MCF 10A (cell line): ENCODE measurements at regions of chr4 and their contacts with region 1.

Region 1: DNA sequence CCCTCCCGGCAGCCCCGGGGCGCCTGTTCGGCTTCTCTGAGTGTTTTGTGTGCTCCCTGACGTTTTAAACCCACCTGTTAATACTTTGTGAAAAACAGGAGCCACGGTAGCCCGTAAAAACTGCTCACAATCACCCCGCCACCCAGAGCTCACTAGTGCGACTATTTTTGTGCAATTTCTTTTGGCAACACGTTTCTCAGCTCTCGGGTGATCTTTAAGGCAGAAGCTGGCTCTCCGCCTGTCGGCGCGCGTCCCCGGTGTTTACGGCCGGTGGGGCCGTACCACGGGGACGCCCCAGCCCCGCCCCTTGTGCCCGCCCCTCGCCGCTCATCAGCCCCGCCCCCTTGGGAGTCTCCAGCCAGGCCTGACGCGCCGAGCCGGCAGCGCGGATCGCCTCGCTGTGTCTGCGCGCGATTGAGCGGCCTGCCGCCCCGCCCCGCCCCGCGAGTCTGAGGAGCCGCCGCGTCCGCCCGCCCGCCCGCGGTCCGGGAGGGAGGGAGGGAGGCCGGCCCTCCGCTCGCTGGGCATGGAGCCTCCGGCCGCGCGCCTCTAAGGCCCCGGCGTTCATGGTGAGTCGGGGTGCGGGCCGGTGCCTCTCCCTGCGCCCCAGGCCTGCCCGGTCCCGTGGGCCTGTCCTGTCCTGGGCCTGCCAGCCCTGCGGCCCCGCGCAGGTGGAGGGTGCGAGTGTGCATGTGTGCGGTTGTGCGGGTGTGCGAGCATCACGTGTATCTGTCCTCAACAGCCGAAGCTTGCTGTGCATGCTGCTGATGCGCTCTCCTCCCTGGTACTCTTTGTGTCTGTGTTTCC is 56.2 kb upstream of the TADA2B start:
- DNase-seq: peak; percentile 95
- H3K4me3 Mint-ChIP-seq: peak overlapping the region; percentile 97
- H3K27ac Mint-ChIP-seq: peak overlapping the region; percentile 95
- H3K4me1 Mint-ChIP-seq: peaks cover 45% of the 10 kb centered on the region
- H3K27me3 Mint-ChIP-seq: no peaks in the 10 kb centered on the region
- CTCF ChIP-seq: no peak

Region 2: GRCh38 chr4:6909073-6909965 is 77.7 kb before region 1 on chr4 and contains the start of gene TBC1D14:
- CTCF ChIA-PET with region 1: interaction called, 4 read pairs
- POLR2A ChIA-PET with region 1: interaction called, 46 read pairs
- intact Hi-C with region 1: loop called (anchors 5 kb)
- DNase-seq: peak; percentile 87
- H3K4me3 Mint-ChIP-seq: peak within 1 kb of the TSS; percentile 91
- H3K27ac Mint-ChIP-seq: peak within 1 kb of the TSS; percentile 77
- H3K4me1 Mint-ChIP-seq: peaks cover 29% of the 10 kb centered on the region
- H3K27me3 Mint-ChIP-seq: no peaks in the 10 kb centered on the region
- CTCF ChIP-seq: no peak
- total RNA-seq, gene TBC1D14: 52.6 and 55.1 TPM in 2 replicates

Region 3: GRCh38 chr4:6942238-6942800 is 44.7 kb before region 1 on chr4:
- CTCF ChIA-PET with region 1: interaction called, 3 read pairs
- POLR2A ChIA-PET with region 1: interaction called, 12 read pairs
- intact Hi-C with region 1: no loop called
- DNase-seq: peak; percentile 86
- H3K4me3 Mint-ChIP-seq: peak overlapping the region; percentile 49
- H3K27ac Mint-ChIP-seq: peak overlapping the region; percentile 95
- H3K4me1 Mint-ChIP-seq: peaks cover 32% of the 10 kb centered on the region
- H3K27me3 Mint-ChIP-seq: no peaks in the 10 kb centered on the region
- CTCF ChIP-seq: no peak

Region 4: DNA sequence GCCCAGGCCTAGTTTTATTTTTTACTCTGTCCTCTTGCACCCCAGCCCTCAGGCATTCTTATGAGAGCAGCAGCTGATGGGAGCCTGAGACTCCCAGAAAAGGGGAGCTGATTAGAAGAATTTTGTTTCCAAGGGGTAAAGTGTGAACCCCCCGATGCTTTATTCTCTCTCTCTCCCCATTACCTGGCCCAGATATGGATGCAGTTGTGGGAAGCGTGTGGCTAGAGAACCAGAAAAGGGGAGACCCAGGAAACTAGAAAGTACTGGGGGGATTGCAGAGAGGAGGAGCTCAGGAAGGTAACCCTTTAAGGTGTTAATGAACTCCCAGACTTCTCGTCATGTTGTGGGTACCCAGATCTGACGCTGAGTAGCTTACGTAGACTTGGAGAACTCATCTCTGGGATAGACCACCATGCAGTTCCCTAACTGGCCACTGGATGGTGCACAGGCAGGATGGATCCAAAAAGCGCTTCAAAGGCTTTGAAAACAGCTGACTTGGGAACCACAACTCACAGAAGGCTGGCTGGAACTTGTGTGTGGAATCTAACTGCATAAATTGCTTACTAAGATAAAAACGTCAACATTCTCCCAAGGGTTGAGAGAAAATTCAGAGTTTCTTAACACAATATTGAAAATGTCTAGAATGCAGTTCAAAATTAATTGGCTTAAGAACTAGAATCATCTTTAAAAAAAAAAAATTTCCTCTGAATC is 12.7 kb before region 1 on chr4:
- CTCF ChIA-PET with region 1: interaction called, 10 read pairs
- POLR2A ChIA-PET with region 1: interaction called, 19 read pairs
- intact Hi-C with region 1: no loop called
- DNase-seq: peak; percentile 87
- H3K4me3 Mint-ChIP-seq: no peak overlapping the region
- H3K27ac Mint-ChIP-seq: no peak overlapping the region
- H3K4me1 Mint-ChIP-seq: no peaks in the 10 kb centered on the region
- H3K27me3 Mint-ChIP-seq: no peaks in the 10 kb centered on the region
- CTCF ChIP-seq: peak; percentile 95

Region 5: DNA sequence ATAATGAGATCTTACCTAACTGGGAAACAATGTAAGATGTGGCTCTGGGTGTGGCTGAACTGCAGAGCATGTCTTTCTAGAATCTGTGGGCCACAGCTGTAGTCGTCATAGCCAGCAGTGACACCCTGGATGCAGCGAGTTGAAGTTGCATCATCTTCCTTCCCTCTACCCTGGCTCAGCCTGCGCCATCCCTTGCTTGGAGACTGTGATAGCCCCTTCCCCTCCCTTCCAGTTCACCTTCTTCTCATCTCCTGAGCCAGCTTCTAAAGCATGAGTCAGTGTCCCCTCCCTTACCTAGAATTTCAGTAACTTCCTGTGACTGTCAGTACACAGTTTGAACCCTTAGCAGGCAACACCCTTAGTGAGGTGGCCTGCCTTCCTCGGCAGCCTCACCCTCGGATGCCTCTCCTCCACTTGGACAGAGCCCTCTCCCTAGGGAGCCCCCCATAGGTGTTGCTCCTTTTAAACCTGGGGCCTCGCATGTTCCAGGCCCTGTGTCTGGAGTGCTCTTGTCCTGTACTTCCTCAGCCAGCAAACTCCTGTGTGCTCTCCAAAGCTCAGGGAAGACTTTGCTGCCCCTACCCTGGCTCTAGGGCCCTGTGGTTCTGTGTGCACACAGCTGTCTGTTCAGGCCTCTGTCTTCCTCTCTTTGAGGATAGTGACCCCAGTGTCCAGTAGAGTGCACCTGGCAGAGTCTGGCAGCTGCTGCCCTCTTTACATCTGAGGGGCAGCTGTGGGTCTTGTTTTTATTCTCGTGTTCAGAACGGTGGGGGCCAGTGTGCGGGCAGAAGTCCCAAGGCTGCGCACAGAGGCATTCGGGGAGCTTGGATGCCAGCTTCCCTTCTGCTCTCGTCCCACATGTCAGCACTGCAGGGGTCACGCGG is 12.4 kb after region 1 on chr4:
- CTCF ChIA-PET with region 1: interaction called, 6 read pairs
- POLR2A ChIA-PET with region 1: interaction called, 68 read pairs
- intact Hi-C with region 1: loop called (anchors 2 kb)
- DNase-seq: peak; percentile 88
- H3K4me3 Mint-ChIP-seq: peak overlapping the region; percentile 29
- H3K27ac Mint-ChIP-seq: peak overlapping the region; percentile 80
- H3K4me1 Mint-ChIP-seq: peaks cover 29% of the 10 kb centered on the region
- H3K27me3 Mint-ChIP-seq: no peaks in the 10 kb centered on the region
- CTCF ChIP-seq: no peak

Region 6: DNA sequence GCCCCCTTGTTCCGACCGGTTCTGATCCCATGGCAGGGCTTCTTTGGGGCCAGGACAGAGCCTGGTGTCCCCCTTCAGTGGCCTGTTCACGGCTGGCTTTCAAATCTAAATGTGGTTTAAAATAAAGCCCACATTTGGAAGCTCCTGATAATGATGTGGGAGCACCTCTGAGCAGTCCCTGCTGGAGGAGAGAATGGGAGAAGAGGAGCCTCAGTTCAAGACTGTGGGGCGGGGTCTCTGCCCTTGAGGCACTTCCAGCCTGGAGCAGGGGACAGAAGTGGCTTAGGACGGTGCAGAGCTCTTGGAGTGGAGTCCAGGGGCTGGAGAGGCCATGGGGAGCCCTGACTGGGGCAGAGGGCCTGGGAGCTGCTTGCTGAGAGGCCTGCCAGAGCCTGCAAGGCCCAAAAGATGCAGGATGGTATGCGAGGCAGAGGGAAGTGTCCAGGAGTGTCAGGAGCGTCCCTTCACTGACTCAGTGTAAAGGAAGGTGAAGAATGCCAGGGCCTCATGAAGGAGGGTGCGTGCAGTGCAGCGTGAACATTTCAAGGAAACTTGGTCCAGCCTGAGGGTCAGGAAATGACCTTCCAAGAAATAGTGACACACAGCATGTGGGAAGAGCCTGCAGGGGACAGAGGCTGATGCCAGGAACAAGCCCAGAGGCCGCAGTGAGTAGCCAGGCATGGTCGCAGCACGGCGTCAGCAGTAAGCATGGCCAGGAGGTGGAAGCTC is 35.1 kb after region 1 on chr4:
- CTCF ChIA-PET with region 1: interaction called, 3 read pairs
- POLR2A ChIA-PET with region 1: interaction called, 20 read pairs
- intact Hi-C with region 1: no loop called
- DNase-seq: peak; percentile 77
- H3K4me3 Mint-ChIP-seq: peak overlapping the region; percentile 30
- H3K27ac Mint-ChIP-seq: peak overlapping the region; percentile 82
- H3K4me1 Mint-ChIP-seq: peaks cover 11% of the 10 kb centered on the region
- H3K27me3 Mint-ChIP-seq: no peaks in the 10 kb centered on the region
- CTCF ChIP-seq: no peak

Region 7: DNA sequence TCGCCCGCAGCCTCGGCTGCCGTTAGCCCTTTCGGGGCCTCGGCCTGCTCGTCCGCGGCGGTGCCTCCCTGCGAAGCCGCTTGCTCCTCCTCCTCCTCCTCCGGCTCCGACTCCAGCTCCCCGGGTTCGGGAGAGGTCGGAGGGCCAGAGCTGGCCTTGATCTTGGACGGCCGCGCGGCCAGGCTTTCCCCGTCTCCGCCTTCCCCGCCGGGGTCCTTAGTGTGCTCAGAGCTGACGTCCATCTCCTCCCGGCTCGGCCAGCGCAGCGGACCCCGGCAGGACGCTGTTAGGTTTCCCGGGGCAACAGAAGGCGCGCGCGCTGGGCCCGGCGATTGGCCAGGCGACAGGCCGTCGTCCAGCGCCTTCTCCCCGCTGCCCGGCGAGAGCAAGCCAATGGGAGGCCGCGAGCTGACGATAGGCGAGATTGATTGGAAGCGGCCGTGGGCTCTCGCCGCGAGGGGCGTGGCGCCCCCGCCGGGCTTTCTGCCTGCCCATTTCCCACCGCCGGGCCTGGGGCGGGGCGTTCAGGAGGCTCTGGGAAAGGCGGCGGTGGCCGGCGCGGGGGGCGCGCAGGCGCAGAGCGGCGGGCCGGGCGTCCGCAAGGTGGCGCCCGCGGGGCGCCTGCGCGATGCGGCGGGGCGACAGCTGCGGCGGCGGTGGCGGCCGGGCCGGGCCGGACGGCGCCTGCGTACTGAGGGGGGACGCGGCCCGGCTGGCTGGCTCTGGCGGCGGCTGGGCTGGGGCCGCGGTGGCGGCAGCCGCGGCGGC is 55.9 kb after region 1 on chr4 and contains the start of gene TADA2B:
- CTCF ChIA-PET with region 1: interaction called, 4 read pairs
- POLR2A ChIA-PET with region 1: interaction called, 75 read pairs
- intact Hi-C with region 1: loop called (anchors 2 kb)
- DNase-seq: peak; percentile 98
- H3K4me3 Mint-ChIP-seq: peak within 1 kb of the TSS; percentile 88
- H3K27ac Mint-ChIP-seq: peak within 1 kb of the TSS; percentile 85
- H3K4me1 Mint-ChIP-seq: peaks cover 39% of the 10 kb centered on the region
- H3K27me3 Mint-ChIP-seq: no peaks in the 10 kb centered on the region
- CTCF ChIP-seq: peak; percentile 29
- total RNA-seq, gene TADA2B: 29.5 and 31.8 TPM in 2 replicates

Region 8: DNA sequence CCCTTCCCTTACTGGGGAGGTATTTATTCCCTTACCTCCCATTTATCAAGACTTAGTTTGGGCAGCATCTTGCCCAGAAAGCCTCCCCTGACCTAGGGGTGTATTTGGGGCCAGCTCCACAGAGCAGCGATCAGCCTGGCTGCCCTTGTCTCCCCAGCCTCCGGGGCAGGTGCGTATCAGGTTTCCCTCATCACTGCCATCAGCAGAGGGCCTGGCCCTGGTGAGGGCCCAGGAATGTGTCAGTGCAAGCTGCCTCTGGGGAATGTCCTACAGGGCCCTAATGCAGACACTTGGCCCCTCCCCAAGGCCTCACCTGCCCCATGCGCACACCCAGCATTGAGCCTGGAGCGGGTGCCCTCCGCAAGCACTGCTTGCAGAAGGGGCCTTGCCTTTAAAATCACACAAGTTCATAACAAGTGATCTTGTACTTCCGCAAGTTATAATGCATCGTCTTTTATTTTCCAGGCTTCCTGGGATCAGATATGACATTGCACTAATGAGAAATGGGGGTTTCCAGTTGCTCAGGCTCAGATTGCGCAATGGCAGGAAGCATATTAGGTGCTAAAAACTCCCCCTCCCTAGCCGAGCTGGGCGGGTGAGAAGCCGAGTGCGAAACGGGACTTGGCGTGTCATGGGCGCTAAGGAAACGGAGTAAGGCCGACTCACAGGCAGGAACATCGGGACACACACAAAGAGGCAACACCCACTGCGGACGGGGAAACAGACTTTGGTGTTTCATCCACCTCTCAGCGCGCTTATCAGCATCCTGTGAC is 978.1 kb after region 1 on chr4:
- CTCF ChIA-PET with region 1: no interaction called
- POLR2A ChIA-PET with region 1: no interaction called
- intact Hi-C with region 1: no loop called
- DNase-seq: peak; percentile 91
- H3K4me3 Mint-ChIP-seq: no peak overlapping the region
- H3K27ac Mint-ChIP-seq: peak overlapping the region; percentile 61
- H3K4me1 Mint-ChIP-seq: peaks cover 40% of the 10 kb centered on the region
- H3K27me3 Mint-ChIP-seq: no peaks in the 10 kb centered on the region
- CTCF ChIP-seq: no peak